ENCODE measurements at regions of chr22 and their contacts with region 1.

Region 1: GRCh38 chr22:41697126-41697775 is 2.1 kb upstream of the MEI1 start:
- DNase-seq: peak; percentile 57
- ATAC-seq: peak; percentile 94
- H3K4me3 ChIP-seq: no peak overlapping the region
- H3K27ac ChIP-seq: peak overlapping the region; percentile 48; the same call in 1 of the 2 replicates
- H3K4me1 ChIP-seq: peaks cover 19% of the 10 kb centered on the region
- H3K27me3 ChIP-seq: no peaks in the 10 kb centered on the region
- CTCF ChIP-seq: peak; percentile 97 to 98 (median 98); a peak in 5 of 6 replicates
- EP300 ChIP-seq: no peak
- POLR2A ChIP-seq: no peak
- RAD21 ChIP-seq: peak; percentile 94

Region 2: GRCh38 chr22:41642331-41643110 is 54.7 kb before region 1 on chr22:
- CTCF ChIA-PET with region 1: no interaction called
- POLR2A ChIA-PET with region 1: no interaction called
- RAD21 ChIA-PET with region 1: no interaction called
- SMC1A ChIA-PET with region 1: no interaction called
- in situ Hi-C with region 1: no loop called
- intact Hi-C with region 1: no loop called
- DNase-seq: no peak
- ATAC-seq: no peak
- H3K4me3 ChIP-seq: no peak overlapping the region
- H3K27ac ChIP-seq: no peak overlapping the region
- H3K4me1 ChIP-seq: no peaks in the 10 kb centered on the region
- H3K27me3 ChIP-seq: no peaks in the 10 kb centered on the region
- CTCF ChIP-seq: no peak
- EP300 ChIP-seq: no peak
- POLR2A ChIP-seq: no peak
- RAD21 ChIP-seq: no peak

Region 3: DNA sequence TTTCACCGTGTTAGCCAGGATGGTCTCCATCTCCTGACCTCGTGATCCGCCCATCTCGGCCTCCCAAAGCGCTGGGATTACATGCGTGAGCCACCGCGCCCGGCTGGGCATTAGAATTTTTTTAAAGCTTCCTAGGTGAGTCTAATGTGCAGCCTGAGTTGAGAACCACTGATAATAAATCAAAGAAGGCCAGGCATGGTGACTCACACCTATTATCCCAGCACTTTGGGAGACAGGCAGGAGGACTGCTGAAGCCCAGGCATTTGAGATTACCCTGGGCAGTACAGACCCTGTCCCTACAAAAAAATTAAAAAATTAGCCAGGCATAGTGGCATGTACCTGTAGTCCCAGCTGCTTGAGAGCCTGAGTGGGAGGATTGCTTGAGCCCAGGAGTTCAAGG is 15.8 kb after region 1 on chr22:
- CTCF ChIA-PET with region 1: interaction called, 20 read pairs
- POLR2A ChIA-PET with region 1: interaction called, 7 read pairs
- RAD21 ChIA-PET with region 1: interaction called, 3 read pairs
- SMC1A ChIA-PET with region 1: interaction called, 3 read pairs
- in situ Hi-C with region 1: no loop called
- intact Hi-C with region 1: no loop called
- DNase-seq: no peak
- ATAC-seq: no peak
- H3K4me3 ChIP-seq: no peak overlapping the region
- H3K27ac ChIP-seq: no peak overlapping the region
- H3K4me1 ChIP-seq: no peaks in the 10 kb centered on the region
- H3K27me3 ChIP-seq: no peaks in the 10 kb centered on the region
- CTCF ChIP-seq: no peak
- EP300 ChIP-seq: no peak
- POLR2A ChIP-seq: no peak
- RAD21 ChIP-seq: no peak

Region 4: DNA sequence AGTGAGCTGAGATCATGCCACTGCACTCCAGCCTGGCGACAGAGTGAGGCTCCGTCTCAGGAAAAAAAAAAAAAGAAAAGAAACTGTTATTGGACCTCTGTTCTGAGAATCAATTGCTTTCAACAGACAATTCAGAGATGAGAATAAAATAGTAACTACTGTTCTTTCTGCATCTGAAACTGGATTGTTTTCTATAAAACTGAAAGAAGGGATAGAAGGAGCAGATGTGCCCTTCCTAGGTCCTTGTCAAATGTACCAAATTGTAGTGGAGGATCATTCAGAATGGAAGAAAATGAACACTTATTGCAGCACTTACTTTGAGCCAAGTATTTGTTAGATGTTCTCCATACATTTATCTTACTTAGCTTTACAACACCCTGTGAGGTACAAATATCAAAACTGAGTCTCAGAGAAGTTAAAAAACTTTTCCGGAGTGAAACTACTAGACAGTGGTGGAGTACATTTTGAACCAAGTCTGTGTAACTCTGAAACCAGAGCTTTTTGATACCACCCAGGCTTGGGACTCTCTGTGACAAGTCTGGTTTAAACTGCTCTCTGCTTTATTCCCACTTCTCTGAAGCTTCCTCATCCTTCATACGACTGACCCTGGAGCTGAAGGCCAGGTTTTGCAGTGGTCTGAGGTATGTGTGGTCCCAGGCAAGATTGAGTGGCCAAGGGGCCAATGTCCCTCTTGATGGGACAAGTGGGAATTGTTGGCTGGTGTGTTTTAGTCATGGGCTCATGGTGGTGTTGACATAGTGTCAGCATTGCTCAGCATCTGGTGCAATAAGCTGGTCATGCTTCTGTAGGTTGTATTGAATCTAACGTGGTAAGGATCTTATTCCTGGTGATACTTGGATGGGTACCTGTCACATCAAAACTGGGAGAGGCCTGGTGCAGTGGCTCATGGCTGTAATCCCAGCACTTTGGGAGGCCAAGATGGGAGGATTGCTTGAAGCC is 55.0 kb after region 1 on chr22:
- CTCF ChIA-PET with region 1: interaction called, 71 read pairs
- POLR2A ChIA-PET with region 1: no interaction called
- RAD21 ChIA-PET with region 1: interaction called, 33 read pairs
- SMC1A ChIA-PET with region 1: interaction called, 42 read pairs
- in situ Hi-C with region 1: no loop called
- intact Hi-C with region 1: loop called (anchors 5 kb)
- DNase-seq: peak; percentile 66
- ATAC-seq: peak; percentile 88
- H3K4me3 ChIP-seq: peak overlapping the region; percentile 32; the same call in 1 of the 2 replicates
- H3K27ac ChIP-seq: peak overlapping the region; percentile 66
- H3K4me1 ChIP-seq: peaks cover 39% of the 10 kb centered on the region
- H3K27me3 ChIP-seq: no peaks in the 10 kb centered on the region
- CTCF ChIP-seq: no peak
- EP300 ChIP-seq: 0 out of 4 replicates have a peak, but pooled peaks of 1 of the 2 experiments have one; percentile 17
- POLR2A ChIP-seq: no peak
- RAD21 ChIP-seq: no peak

Region 5: DNA sequence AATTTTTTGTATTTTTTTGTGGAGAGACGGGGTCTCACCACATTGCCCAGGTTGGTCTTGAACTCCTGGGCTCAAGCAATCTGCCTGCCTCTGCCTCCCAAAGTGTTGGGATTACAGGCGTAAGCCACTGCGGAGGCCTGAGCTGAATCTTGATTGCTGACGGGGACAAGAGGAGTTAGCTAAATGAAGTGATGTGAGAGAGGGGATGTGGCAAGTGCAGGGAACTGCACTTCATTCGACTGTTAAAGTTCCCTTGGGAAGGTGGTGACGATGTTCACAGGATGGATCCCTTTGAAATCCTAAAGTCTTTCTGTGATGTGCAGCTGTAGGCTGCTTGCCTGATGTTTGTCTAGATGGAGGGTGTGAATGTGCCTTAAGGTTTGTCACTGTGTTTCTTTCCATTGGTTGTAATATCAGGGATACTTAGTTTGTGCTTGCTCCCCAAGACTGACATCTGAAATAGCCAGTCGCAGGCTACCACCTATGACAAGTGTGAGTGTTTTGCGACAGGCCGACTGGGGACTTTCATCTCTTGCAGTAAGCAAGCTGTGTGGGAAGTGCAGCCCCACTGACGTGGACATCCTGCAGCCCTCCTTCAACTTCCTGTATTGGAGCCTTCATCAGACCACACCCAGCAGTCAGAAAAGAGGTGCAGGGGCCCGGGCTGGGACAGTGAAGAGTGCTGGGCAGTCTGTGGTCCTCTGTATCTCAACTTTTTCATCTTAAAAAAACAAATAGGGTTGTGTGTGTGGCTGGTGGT is 83.7 kb after region 1 on chr22:
- CTCF ChIA-PET with region 1: interaction called, 47 read pairs
- POLR2A ChIA-PET with region 1: interaction called, 14 read pairs
- RAD21 ChIA-PET with region 1: interaction called, 31 read pairs
- SMC1A ChIA-PET with region 1: interaction called, 40 read pairs
- in situ Hi-C with region 1: no loop called
- intact Hi-C with region 1: no loop called
- DNase-seq: peak; percentile 90
- ATAC-seq: peak; percentile 97
- H3K4me3 ChIP-seq: peak overlapping the region; percentile 76
- H3K27ac ChIP-seq: peak overlapping the region; percentile 54
- H3K4me1 ChIP-seq: peaks cover 11% of the 10 kb centered on the region
- H3K27me3 ChIP-seq: no peaks in the 10 kb centered on the region
- CTCF ChIP-seq: no peak
- EP300 ChIP-seq: peak in 1 of 2 experiments; percentile 34; a peak in 1 of 4 replicates
- POLR2A ChIP-seq: peak; percentile 81
- RAD21 ChIP-seq: no peak

Region 6: GRCh38 chr22:41832553-41833368 is 135.5 kb after region 1 on chr22 and contains the start of gene SREBF2:
- CTCF ChIA-PET with region 1: interaction called, 20 read pairs
- POLR2A ChIA-PET with region 1: interaction called, 4 read pairs
- RAD21 ChIA-PET with region 1: interaction called, 8 read pairs
- SMC1A ChIA-PET with region 1: interaction called, 10 read pairs
- in situ Hi-C with region 1: no loop called
- intact Hi-C with region 1: no loop called
- DNase-seq: peak; percentile 99
- ATAC-seq: peak; percentile 92
- H3K4me3 ChIP-seq: peak within 1 kb of the TSS; percentile 92
- H3K27ac ChIP-seq: peak within 1 kb of the TSS; percentile 95
- H3K4me1 ChIP-seq: peaks cover 12% of the 10 kb centered on the region
- H3K27me3 ChIP-seq: no peaks in the 10 kb centered on the region
- CTCF ChIP-seq: 0 out of 6 replicates have a peak, but pooled peaks of 1 of the 3 experiments have one; percentile 1
- EP300 ChIP-seq: peak; percentile 64 to 75
- POLR2A ChIP-seq: peak; percentile 94
- RAD21 ChIP-seq: no peak
- polyA plus RNA-seq, gene SREBF2: 2.4 to 3.6 TPM

Region 7: GRCh38 chr22:41940832-41941765 is 243.8 kb after region 1 on chr22:
- CTCF ChIA-PET with region 1: interaction called, 75 read pairs
- POLR2A ChIA-PET with region 1: interaction called, 23 read pairs
- RAD21 ChIA-PET with region 1: interaction called, 58 read pairs
- SMC1A ChIA-PET with region 1: interaction called, 38 read pairs
- in situ Hi-C with region 1: loop called (anchors 5 kb)
- intact Hi-C with region 1: loop called (anchors 1 kb)
- DNase-seq: no peak
- ATAC-seq: peak; percentile 60
- H3K4me3 ChIP-seq: 0 out of 2 replicates have a peak overlapping the region, but pooled peaks have one; percentile 4
- H3K27ac ChIP-seq: peak overlapping the region; percentile 94
- H3K4me1 ChIP-seq: peaks cover 66% of the 10 kb centered on the region
- H3K27me3 ChIP-seq: no peaks in the 10 kb centered on the region
- CTCF ChIP-seq: peak; percentile 88 to 97 (median 95)
- EP300 ChIP-seq: peak in 1 of 2 experiments; percentile 11; a peak in 1 of 4 replicates
- POLR2A ChIP-seq: peak; percentile 33; the same call in 1 of the 2 replicates
- RAD21 ChIP-seq: peak; percentile 92